ENCODE measurements at regions of chr2 and their contacts with region 1.

Region 1: GRCh38 chr2:216404010-216404618 is 8.2 kb upstream of the SMARCAL1 start:
- DNase-seq: peak; percentile 35
- ATAC-seq: peak; percentile 91
- H3K4me3 ChIP-seq: no peak overlapping the region
- H3K27ac ChIP-seq: no peak overlapping the region
- H3K4me1 ChIP-seq: no peaks in the 10 kb centered on the region
- H3K27me3 ChIP-seq: peaks cover 20% of the 10 kb centered on the region
- CTCF ChIP-seq: peak; percentile 62 to 86 (median 67)
- POLR2A ChIP-seq: no peak
- RAD21 ChIP-seq: peak; percentile 75

Region 2: GRCh38 chr2:216222650-216223352 is 181.3 kb before region 1 on chr2:
- CTCF ChIA-PET with region 1: interaction called, 13 read pairs
- POLR2A ChIA-PET with region 1: no interaction called
- RAD21 ChIA-PET with region 1: no interaction called
- intact Hi-C with region 1: loop called (anchors 2 kb)
- DNase-seq: no peak
- ATAC-seq: peak; percentile 57
- H3K4me3 ChIP-seq: no peak overlapping the region
- H3K27ac ChIP-seq: no peak overlapping the region
- H3K4me1 ChIP-seq: peaks cover 0 to 22% of the 10 kb centered on the region in 2 experiments; a peak in 2 of 4 replicates
- H3K27me3 ChIP-seq: no peaks in the 10 kb centered on the region
- CTCF ChIP-seq: peak; percentile 37 to 53 (median 43); a peak in 4 of 6 replicates
- POLR2A ChIP-seq: no peak
- RAD21 ChIP-seq: peak; percentile 76